ENCODE measurements at regions of chr18 and their contacts with region 1.

Region 1: DNA sequence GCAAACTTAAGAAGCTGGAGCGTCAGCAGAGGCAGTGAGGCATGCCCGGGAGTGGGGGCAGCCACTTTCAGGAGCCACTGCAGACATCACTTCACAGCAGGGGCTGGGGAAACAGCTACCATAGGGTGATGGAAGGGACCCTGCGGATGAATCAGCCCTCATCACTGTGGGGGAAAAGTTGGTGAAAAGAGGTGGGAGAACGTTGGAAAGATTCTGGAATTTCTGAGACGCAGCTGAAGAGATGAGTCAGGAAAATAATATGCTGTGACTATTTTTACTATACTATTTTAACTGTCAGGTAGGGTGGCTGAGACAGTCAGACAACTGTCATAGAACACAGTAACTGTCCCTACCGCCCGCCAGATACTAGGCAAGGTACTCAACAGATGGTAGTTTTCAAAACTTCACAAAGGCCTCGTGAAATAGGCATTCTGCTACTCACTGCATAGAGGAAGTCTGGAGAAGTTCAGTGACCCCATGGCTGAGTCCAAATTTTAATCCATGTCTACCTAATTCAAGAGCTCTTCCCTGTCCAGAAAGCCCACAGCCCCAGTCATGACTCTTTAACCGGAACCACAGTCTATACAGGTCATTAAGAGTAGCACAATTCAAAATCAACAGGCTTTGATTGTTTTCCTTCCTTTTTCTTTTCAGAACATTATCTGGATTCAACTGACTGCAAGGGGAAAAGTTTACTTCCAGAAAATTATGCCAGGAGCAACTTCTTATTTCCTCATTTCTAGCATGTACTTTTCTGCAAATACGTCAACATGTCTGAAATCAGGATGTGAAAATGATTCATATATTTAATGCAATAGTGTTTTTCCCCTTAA is 39.3 kb upstream of the EPB41L3 start:
- H3K4me3 ChIP-seq: no peak overlapping the region
- H3K27ac ChIP-seq: no peak overlapping the region
- H3K4me1 ChIP-seq: peaks cover 19% of the 10 kb centered on the region
- CTCF ChIP-seq: no peak

Region 2: GRCh38 chr18:5463379-5463778 is 119.7 kb before region 1 on chr18:
- CTCF ChIA-PET with region 1: no interaction called
- POLR2A ChIA-PET with region 1: no interaction called
- H3K4me3 ChIP-seq: no peak overlapping the region
- H3K27ac ChIP-seq: no peak overlapping the region
- H3K4me1 ChIP-seq: peaks cover 20% of the 10 kb centered on the region
- CTCF ChIP-seq: no peak

Region 3: DNA sequence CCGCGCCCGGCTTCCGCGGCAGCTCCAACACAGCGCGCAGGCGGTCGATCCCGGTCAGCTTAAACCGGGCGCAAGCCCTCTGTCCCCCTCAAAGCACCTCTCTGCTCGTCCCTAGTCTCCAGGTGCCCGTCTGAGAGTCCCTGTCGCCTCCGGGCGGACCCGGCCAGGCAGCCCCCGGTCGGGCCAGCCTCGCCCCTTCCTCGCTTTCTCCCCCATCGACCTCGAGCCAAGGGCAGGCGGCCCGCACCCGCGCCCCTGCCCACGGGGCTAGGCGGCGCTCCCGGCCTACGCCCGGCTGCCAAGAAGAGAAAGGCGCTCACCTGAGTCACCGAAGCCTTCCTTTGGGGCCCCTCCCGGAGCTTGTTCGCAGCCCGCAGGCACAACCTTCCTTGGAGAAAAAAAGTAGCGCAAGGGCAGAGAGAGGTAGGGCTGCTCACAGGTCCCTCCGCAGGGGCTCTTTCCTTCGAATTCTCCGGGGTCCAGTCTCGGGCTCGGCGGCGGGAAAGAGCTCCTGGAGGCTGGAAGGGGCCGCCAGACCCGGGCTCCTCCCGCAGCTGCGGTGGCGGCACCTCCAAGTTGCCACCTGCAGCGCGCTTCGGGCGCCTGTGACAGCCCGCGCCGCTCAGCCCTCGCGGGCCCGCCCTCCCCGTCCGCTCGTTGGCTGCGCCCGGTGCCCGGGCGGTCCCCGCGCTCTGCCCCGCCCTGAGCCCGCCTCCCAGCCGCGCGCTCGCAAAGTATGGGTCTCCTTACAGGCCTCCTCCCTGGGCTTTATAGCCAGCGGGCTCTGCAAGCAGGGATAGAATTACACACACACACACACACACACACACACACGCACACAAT is 47.2 kb after region 1 on chr18:
- CTCF ChIA-PET with region 1: interaction called, 3 read pairs
- POLR2A ChIA-PET with region 1: interaction called, 12 read pairs
- H3K4me3 ChIP-seq: peak overlapping the region; percentile 61
- H3K27ac ChIP-seq: peak overlapping the region; percentile 96
- H3K4me1 ChIP-seq: peaks cover 19% of the 10 kb centered on the region
- CTCF ChIP-seq: no peak

Region 4: DNA sequence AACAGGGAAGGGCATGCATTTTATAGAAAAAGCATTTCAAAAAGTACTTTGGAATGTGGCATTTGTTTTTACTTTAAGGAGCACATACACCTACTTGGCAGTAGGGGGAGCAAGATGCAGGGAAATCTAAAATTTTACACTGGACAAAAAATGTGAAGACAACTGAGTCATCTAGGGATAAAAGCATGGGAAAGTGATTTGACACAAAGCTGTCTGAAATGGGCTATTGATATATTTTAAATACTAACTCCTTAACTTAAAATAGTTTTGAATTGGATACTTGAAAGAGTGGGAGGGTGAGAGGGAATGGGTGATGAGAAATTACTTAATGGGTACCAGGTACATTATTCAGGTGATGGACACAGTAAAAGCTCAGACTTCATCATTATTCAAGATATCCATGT is 296.4 kb after region 1 on chr18:
- CTCF ChIA-PET with region 1: no interaction called
- POLR2A ChIA-PET with region 1: no interaction called
- H3K4me3 ChIP-seq: no peak overlapping the region
- H3K27ac ChIP-seq: no peak overlapping the region
- H3K4me1 ChIP-seq: no peaks in the 10 kb centered on the region
- CTCF ChIP-seq: peak; percentile 62